ENCODE measurements at regions of chr14 and their contacts with region 1.

Region 1: GRCh38 chr14:58501214-58501816 is 73.8 kb downstream of the KIAA0586 start:
- ATAC-seq: peak in 7 of 8 experiments; percentile 38 to 71 (median 61)
- H3K4me3 ChIP-seq: no peak overlapping the region
- H3K27ac ChIP-seq: no peak overlapping the region
- H3K4me1 ChIP-seq: no peaks in the 10 kb centered on the region

Region 2: GRCh38 chr14:58227096-58227819 is 274.1 kb before region 1 on chr14:
- in situ Hi-C with region 1: no loop called
- ATAC-seq: no peak
- H3K4me3 ChIP-seq: no peak overlapping the region
- H3K27ac ChIP-seq: no peak overlapping the region
- H3K4me1 ChIP-seq: no peaks in the 10 kb centered on the region

Region 3: GRCh38 chr14:58560208-58560607 is 58.9 kb after region 1 on chr14:
- in situ Hi-C with region 1: no loop called
- ATAC-seq: peak in 7 of 8 experiments; percentile 49 to 85 (median 68)
- H3K4me3 ChIP-seq: no peak overlapping the region
- H3K27ac ChIP-seq: no peak overlapping the region
- H3K4me1 ChIP-seq: peaks cover 4 to 21% of the 10 kb centered on the region in 2 donors

Region 4: DNA sequence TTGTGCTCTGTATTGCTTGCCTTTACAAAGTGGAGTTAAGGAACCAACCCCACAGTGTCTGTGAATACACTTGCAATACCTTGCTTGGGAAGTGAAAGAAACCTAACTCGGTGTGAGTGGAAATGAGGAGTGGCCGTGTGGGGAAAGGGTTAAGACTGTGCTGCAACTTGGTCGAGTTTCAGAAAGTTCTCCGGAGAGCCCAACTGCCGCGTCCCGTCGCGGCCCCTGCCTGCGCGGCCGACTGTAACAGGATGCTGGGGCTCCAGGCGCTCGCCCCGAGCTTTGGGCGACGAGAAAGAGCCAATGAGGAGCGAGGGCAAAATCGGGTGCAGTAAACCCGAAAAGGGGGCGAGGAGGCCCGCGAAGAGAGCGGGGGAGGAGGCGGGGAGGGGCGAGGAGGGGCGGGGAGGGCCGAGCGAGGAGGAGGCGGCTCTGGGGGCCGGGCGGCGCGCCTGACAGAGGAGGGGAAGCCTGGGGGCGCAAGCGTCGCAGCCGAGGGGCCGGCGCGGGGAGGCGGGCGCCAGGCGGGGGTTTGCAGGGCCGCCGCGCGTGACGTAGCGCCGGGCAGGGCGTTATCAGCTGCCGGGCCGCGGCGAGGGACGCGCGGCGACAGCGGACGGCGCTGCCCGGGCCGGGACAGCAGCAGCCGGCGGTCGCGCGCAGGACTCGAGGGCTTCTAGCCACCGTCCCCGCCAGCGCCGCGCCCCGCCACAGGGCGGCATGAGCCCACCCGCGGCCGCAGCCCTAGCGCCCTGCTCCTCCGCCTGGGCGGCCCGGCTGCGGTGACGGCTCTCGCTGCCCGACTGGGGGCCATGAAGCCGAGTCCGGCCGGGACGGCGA is 136.3 kb after region 1 on chr14 and contains the start of gene DACT1:
- in situ Hi-C with region 1: loop called in 1 of 9 experiments (anchors 10 kb)
- ATAC-seq: peak; percentile 65 to 83 (median 77)
- H3K4me3 ChIP-seq: peak within 1 kb of the TSS; percentile 69 to 96 (median 79)
- H3K27ac ChIP-seq: peak within 1 kb of the TSS; percentile 62 to 78
- H3K4me1 ChIP-seq: peaks cover 8 to 15% of the 10 kb centered on the region in 2 donors
- total RNA-seq, gene DACT1: 1.2 to 55.8 (median 30.9) TPM

Region 5: DNA sequence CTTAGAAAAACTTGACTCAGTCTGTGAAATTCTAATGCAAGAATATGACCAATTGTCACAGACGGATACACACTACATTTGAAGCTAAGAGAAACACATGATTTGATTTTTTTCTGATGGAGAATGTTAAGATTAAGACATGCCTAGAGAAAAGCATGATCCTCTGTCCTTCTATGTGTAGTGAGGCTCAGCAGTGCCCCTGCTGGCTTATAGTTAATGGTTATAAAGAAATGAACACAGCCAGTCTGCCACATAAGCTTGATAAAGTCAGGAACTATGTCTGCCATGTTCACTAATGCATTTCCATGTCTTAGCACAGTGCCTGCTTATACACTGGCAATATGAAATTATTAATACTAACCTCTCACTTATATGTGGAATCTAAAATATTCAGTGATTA is 519.1 kb after region 1 on chr14:
- in situ Hi-C with region 1: loop called in 1 of 9 experiments (anchors 25 kb)
- ATAC-seq: peak in 5 of 8 experiments; percentile 42 to 78 (median 75)
- H3K4me3 ChIP-seq: no peak overlapping the region
- H3K27ac ChIP-seq: no peak overlapping the region
- H3K4me1 ChIP-seq: no peaks in the 10 kb centered on the region

Region 6: GRCh38 chr14:59055439-59056045 is 554.2 kb after region 1 on chr14:
- in situ Hi-C with region 1: loop called in 2 of 9 experiments (anchors 10 to 25 kb)
- ATAC-seq: peak in 3 of 8 experiments; percentile 54 to 86 (median 84)
- H3K4me3 ChIP-seq: no peak overlapping the region
- H3K27ac ChIP-seq: no peak overlapping the region
- H3K4me1 ChIP-seq: no peaks in the 10 kb centered on the region

Region 7: GRCh38 chr14:59150990-59151389 is 649.7 kb after region 1 on chr14:
- in situ Hi-C with region 1: no loop called
- ATAC-seq: no peak
- H3K4me3 ChIP-seq: no peak overlapping the region
- H3K27ac ChIP-seq: no peak overlapping the region
- H3K4me1 ChIP-seq: peaks cover 21 to 23% of the 10 kb centered on the region in 2 donors